ENCODE measurements at regions of chr2 and their contacts with region 1.

Region 1: DNA sequence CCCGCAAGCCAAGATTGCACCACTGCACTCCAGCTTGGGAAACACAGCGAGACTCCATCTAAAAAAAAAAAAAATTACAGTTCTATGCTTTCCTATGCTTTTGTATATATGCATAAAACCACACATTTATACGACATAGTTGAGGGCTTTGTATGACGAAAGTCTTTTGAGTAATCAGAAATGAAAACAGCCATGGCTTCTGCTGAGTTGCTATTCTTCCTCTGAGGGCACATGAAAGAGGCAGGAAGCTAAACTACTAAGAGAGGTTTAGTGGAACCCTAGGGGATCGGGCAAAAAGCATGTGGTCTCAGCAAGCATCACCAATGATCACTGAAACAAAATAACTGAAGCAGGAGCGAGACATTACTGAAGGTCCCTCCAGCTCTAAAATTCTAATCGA is 99.6 kb downstream of the ZAP70 start:
- DNase-seq: no peak
- ATAC-seq: no peak
- H3K4me3 ChIP-seq: no peak overlapping the region
- H3K27ac ChIP-seq: no peak overlapping the region
- H3K4me1 ChIP-seq: no peaks in the 10 kb centered on the region
- H3K27me3 ChIP-seq: no peaks in the 10 kb centered on the region
- CTCF ChIP-seq: no peak

Region 2: GRCh38 chr2:98378930-98379671 is 566.2 kb after region 1 on chr2:
- intact Hi-C with region 1: loop called (anchors 10 kb)
- DNase-seq: no peak
- ATAC-seq: peak; percentile 91
- H3K4me3 ChIP-seq: no peak overlapping the region
- H3K27ac ChIP-seq: peak overlapping the region; percentile 55
- H3K4me1 ChIP-seq: peaks cover 11% of the 10 kb centered on the region
- H3K27me3 ChIP-seq: peaks cover 8% of the 10 kb centered on the region
- CTCF ChIP-seq: no peak

Measured in upper lobe of right lung (tissue), 1 donor.